ENCODE measurements at regions of chr17 and their contacts with region 1.

Region 1: GRCh38 chr17:27654654-27655524 is 23.9 kb downstream of the LGALS9 start:
- ATAC-seq: peak in 6 of 8 experiments; percentile 27 to 86 (median 44)
- H3K4me3 ChIP-seq: no peak overlapping the region
- H3K27ac ChIP-seq: no peak overlapping the region
- H3K4me1 ChIP-seq: no peaks in the 10 kb centered on the region

Region 2: DNA sequence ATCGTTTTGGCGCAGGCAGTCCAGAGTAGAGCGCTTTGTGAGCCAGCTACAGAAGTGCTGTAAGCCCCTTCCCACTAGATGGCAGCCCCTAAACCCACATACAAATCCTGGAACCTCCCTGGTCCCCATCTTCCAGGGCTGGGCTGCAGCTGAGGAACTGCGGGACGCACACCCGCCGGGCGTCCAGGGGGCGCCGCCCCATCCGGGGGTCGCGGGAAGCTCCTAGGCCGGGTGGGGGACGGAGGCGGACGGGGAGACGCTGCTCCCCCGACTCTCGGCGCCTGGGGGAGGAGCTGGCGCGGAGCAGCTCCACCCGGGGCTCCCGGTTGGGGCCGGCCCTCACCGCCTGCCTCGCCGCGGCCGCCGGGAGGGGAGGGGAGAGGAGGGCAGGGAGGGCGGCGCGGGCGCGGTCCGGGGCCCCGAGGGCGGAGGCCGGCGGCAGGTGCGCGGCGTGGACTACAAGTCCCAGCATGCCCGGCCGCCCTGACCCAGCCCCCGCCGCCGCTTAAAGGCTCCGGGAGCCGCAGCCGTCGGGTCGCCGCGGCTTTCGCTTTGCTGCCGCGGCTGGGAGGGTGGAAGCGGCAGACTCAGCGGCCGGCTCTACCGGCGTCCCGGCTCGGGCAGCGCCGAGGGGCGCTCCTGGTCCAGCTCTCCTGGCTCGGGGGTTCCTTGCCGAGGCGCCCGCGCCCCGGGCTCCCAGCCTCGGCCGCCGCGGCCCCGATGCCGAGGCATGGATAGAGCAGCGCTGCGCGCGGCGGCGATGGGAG is 198.8 kb before region 1 on chr17 and contains the start of gene KSR1:
- in situ Hi-C with region 1: no loop called
- ATAC-seq: peak; percentile 87 to 94 (median 91)
- H3K4me3 ChIP-seq: peak within 1 kb of the TSS; percentile 84 to 95 (median 92)
- H3K27ac ChIP-seq: peak within 1 kb of the TSS; percentile 77 to 87
- H3K4me1 ChIP-seq: peaks cover 16 to 21% of the 10 kb centered on the region in 2 donors
- total RNA-seq, gene KSR1: 11.2 to 34.1 (median 17.6) TPM

Region 3: GRCh38 chr17:27741361-27741861 is 86.5 kb after region 1 on chr17:
- in situ Hi-C with region 1: loop called in 1 of 9 experiments (anchors 5 kb)
- ATAC-seq: peak in 2 of 8 experiments; percentile 74 to 98
- H3K4me3 ChIP-seq: no peak overlapping the region
- H3K27ac ChIP-seq: no peak overlapping the region
- H3K4me1 ChIP-seq: no peaks in the 10 kb centered on the region

Region 4: GRCh38 chr17:27760069-27760885 is 105.4 kb after region 1 on chr17:
- in situ Hi-C with region 1: loop called in 1 of 9 experiments (anchors 25 kb)
- ATAC-seq: peak in 4 of 8 experiments; percentile 23 to 73 (median 62)
- H3K4me3 ChIP-seq: no peak overlapping the region
- H3K27ac ChIP-seq: no peak overlapping the region
- H3K4me1 ChIP-seq: no peaks in the 10 kb centered on the region

Region 5: GRCh38 chr17:27862004-27862403 is 207.1 kb after region 1 on chr17:
- in situ Hi-C with region 1: loop called in 1 of 9 experiments (anchors 25 kb)
- ATAC-seq: peak in 6 of 8 experiments; percentile 14 to 68 (median 57)
- H3K4me3 ChIP-seq: no peak overlapping the region
- H3K27ac ChIP-seq: no peak overlapping the region
- H3K4me1 ChIP-seq: peaks cover 0 to 3% of the 10 kb centered on the region in 2 donors

Region 6: DNA sequence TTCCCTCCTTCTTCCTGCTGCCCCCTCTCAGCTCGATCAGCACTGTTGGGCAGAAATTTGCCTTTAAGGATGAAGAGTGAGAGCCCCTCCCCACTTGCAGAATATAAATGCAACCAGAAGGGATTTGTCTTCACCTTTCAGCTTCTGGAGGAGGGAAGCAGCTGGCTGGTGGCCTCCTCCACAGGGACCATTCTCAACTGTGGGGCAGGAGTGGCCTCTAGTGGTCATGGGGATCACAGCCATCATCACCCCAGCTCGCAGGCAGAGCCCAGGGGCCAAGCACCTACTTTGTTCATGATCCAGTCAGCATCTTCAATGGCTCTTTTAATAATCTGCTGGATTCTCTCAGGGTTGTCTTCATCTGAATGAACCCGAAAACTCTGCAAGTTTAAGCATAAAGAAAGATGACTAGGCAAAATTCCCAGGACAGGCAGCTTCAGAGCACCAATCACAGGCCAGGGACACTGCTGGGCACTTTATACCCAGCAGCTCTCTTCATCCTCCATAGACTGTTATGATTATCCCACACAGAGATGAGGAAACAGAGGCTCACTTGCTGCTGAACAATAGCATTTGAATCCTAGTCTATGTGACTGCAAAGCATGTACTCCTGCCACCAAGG is 225.2 kb after region 1 on chr17:
- in situ Hi-C with region 1: loop called in 1 of 9 experiments (anchors 10 kb)
- ATAC-seq: peak; percentile 91 to 100 (median 99)
- H3K4me3 ChIP-seq: no peak overlapping the region
- H3K27ac ChIP-seq: no peak overlapping the region
- H3K4me1 ChIP-seq: peaks cover 3 to 9% of the 10 kb centered on the region in 2 donors

Region 7: DNA sequence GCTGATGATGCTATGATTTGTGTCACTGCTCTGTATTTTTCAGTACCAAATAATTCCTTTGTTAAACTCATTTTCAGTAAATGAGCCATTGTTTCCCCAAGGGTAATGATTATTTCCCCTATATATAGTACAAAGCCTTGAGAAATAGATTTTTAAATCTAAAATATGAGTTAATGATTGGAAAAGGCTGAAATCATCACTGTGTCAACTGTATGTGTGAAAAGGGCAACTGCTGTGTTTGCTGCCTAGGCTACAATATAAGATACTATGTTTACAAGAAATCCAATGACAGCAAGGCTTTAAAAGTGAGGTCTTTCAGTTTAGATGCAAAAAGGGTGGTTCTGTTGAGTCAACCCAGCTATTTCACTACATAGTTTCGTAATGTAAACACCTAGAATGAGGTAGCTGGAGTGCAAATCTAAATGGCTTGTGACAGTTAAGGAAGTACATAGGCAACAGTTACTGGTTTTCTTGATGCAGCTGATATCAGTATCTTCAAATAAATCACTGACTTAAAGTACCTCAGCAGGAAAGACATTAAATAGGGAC is 402.9 kb after region 1 on chr17:
- in situ Hi-C with region 1: no loop called
- ATAC-seq: peak in 5 of 8 experiments; percentile 25 to 69 (median 45)
- H3K4me3 ChIP-seq: no peak overlapping the region
- H3K27ac ChIP-seq: no peak overlapping the region
- H3K4me1 ChIP-seq: no peaks in the 10 kb centered on the region